ENCODE measurements at regions of chr11 and their contacts with region 1.

Region 1: GRCh38 chr11:85627998-85628770 is at the start of gene TMEM126B:
- DNase-seq: peak; percentile 98 to 99
- ATAC-seq: peak; percentile 97 to 99 (median 98)
- H3K4me3 ChIP-seq: peak within 1 kb of the TSS; percentile 89
- H3K27ac ChIP-seq: peak within 1 kb of the TSS; percentile 86
- H3K4me1 ChIP-seq: peaks cover 28% of the 10 kb centered on the region
- H3K27me3 ChIP-seq: no peaks in the 10 kb centered on the region
- CTCF ChIP-seq: no peak
- total RNA-seq, gene TMEM126B: 20.0 to 33.3 (median 25.2) TPM

Region 2: GRCh38 chr11:85647604-85648299 is 19.6 kb after region 1 on chr11 and contains the start of gene TMEM126A:
- intact Hi-C with region 1: loop called in 1 of 2 experiments (anchors 2 kb)
- DNase-seq: peak; percentile 91 to 94
- ATAC-seq: peak; percentile 96 to 98 (median 98)
- H3K4me3 ChIP-seq: peak within 1 kb of the TSS; percentile 78
- H3K27ac ChIP-seq: peak within 1 kb of the TSS; percentile 87
- H3K4me1 ChIP-seq: peaks cover 33% of the 10 kb centered on the region
- H3K27me3 ChIP-seq: no peaks in the 10 kb centered on the region
- CTCF ChIP-seq: no peak
- total RNA-seq, gene TMEM126A: 32.4 to 51.5 (median 39.1) TPM

Region 3: GRCh38 chr11:85664615-85665481 is 36.7 kb after region 1 on chr11 and contains the start of gene CREBZF:
- intact Hi-C with region 1: loop called (anchors 1 to 5 kb)
- DNase-seq: peak; percentile 94 to 97
- ATAC-seq: peak; percentile 95 to 97 (median 96)
- H3K4me3 ChIP-seq: peak within 1 kb of the TSS; percentile 94
- H3K27ac ChIP-seq: peak within 1 kb of the TSS; percentile 98
- H3K4me1 ChIP-seq: peaks cover 27% of the 10 kb centered on the region
- H3K27me3 ChIP-seq: no peaks in the 10 kb centered on the region
- CTCF ChIP-seq: no peak
- total RNA-seq, gene CREBZF: 14.0 to 32.3 (median 19.4) TPM

Measured in psoas muscle (tissue), 8 donors.